Right ventricle myocardium superior (tissue), 1 donor: ENCODE measurements at regions of chr2 and their contacts with region 1.

Region 1: DNA sequence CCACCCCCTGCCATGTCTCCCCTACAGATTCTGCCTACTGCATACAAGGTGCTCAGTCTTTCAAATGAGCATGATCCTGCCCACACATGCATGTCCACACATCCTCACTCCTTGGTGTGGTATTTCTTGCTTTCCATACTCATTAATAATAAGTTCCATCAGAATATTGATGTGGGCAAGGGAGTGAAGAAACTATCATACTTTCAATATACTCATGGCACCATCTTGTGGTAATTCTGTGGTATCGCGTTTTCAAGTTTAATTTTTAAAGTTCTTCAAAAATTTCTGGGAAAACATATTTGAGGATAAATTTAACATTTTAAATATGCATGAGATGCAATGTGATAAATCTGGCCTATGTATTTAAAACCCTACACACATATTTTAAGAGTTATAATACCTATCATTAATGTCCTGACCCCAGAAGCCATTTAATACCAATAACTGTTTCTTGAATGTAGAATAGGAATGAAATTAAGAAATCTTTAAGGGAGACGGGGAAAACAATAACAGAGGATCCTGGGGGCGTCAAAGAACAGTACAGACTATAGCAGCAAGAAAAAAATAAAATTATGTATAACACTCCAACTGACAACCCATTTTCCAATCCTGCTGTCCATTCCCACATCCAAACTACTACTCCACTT is 110.1 kb downstream of the ZNF385B start:
- DNase-seq: no peak
- ATAC-seq: peak; percentile 49

Region 2: GRCh38 chr2:179422037-179422643 is 329.1 kb before region 1 on chr2:
- intact Hi-C with region 1: loop called (anchors 2 kb)
- DNase-seq: peak; percentile 75
- ATAC-seq: peak; percentile 73

Region 3: GRCh38 chr2:179825494-179825893 is 74.2 kb after region 1 on chr2:
- intact Hi-C with region 1: no loop called
- DNase-seq: no peak
- ATAC-seq: no peak